ENCODE measurements at regions of chr14 and their contacts with region 1.

Region 1: GRCh38 chr14:70955543-70956480 is 48.6 kb downstream of the PCNX1 start:
- DNase-seq: no peak
- ATAC-seq: peak; percentile 87
- H3K4me3 ChIP-seq: no peak overlapping the region
- H3K27ac ChIP-seq: no peak overlapping the region
- H3K4me1 ChIP-seq: no peaks in the 10 kb centered on the region
- H3K27me3 ChIP-seq: no peaks in the 10 kb centered on the region
- CTCF ChIP-seq: peak; percentile 71 to 74 (median 73)
- EP300 ChIP-seq: no peak
- POLR2A ChIP-seq: no peak
- RAD21 ChIP-seq: peak; percentile 84

Region 2: DNA sequence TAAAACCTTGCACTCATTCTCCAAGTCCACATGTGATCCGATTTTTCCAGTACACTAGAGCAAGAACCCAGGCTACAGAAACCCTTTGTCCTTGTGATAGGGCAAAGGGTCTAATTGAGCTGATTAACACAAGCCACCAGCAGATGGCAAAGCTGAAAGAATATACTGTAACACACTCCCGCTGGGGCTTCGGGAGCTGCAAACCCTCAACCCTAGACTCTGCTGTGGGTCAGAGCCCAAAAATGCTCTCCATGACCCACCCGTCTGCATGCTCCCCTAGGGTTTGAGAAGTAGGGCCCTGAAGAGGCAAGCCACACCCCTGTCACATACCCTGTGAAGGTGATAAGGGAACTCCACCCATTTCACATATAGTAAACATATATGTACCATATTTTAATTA is 82.2 kb before region 1 on chr14:
- CTCF ChIA-PET with region 1: interaction called, 41 read pairs
- POLR2A ChIA-PET with region 1: no interaction called
- RAD21 ChIA-PET with region 1: interaction called, 4 read pairs
- SMC1A ChIA-PET with region 1: interaction called, 12 read pairs
- in situ Hi-C with region 1: no loop called
- intact Hi-C with region 1: no loop called
- DNase-seq: no peak
- ATAC-seq: peak; percentile 65
- H3K4me3 ChIP-seq: no peak overlapping the region
- H3K27ac ChIP-seq: no peak overlapping the region
- H3K4me1 ChIP-seq: peaks cover 14% of the 10 kb centered on the region
- H3K27me3 ChIP-seq: no peaks in the 10 kb centered on the region
- CTCF ChIP-seq: peak; percentile 2 to 24 (median 6); a peak in 2 of 6 replicates
- EP300 ChIP-seq: no peak
- POLR2A ChIP-seq: no peak
- RAD21 ChIP-seq: no peak

Region 3: GRCh38 chr14:70887207-70887681 is 68.6 kb before region 1 on chr14:
- CTCF ChIA-PET with region 1: interaction called, 4 read pairs
- POLR2A ChIA-PET with region 1: interaction called, 3 read pairs
- RAD21 ChIA-PET with region 1: interaction called, 8 read pairs
- SMC1A ChIA-PET with region 1: interaction called, 18 read pairs
- in situ Hi-C with region 1: no loop called
- intact Hi-C with region 1: no loop called
- DNase-seq: peak; percentile 71
- ATAC-seq: peak; percentile 72
- H3K4me3 ChIP-seq: peak overlapping the region; percentile 56
- H3K27ac ChIP-seq: peak overlapping the region; percentile 98
- H3K4me1 ChIP-seq: peaks cover 65% of the 10 kb centered on the region
- H3K27me3 ChIP-seq: no peaks in the 10 kb centered on the region
- CTCF ChIP-seq: no peak
- EP300 ChIP-seq: peak in 1 of 2 experiments; percentile 54; a peak in 1 of 4 replicates
- POLR2A ChIP-seq: no peak
- RAD21 ChIP-seq: no peak

Region 4: GRCh38 chr14:70897464-70897863 is 58.3 kb before region 1 on chr14:
- CTCF ChIA-PET with region 1: interaction called, 12 read pairs
- POLR2A ChIA-PET with region 1: no interaction called
- RAD21 ChIA-PET with region 1: no interaction called
- SMC1A ChIA-PET with region 1: interaction called, 3 read pairs
- in situ Hi-C with region 1: no loop called
- intact Hi-C with region 1: no loop called
- DNase-seq: no peak
- ATAC-seq: no peak
- H3K4me3 ChIP-seq: no peak overlapping the region
- H3K27ac ChIP-seq: no peak overlapping the region
- H3K4me1 ChIP-seq: peaks cover 22% of the 10 kb centered on the region
- H3K27me3 ChIP-seq: no peaks in the 10 kb centered on the region
- CTCF ChIP-seq: no peak
- EP300 ChIP-seq: no peak
- POLR2A ChIP-seq: no peak
- RAD21 ChIP-seq: no peak

Region 5: GRCh38 chr14:70907176-70907995 is 48.4 kb before region 1 on chr14 and contains the start of gene PCNX1:
- CTCF ChIA-PET with region 1: interaction called, 88 read pairs
- POLR2A ChIA-PET with region 1: interaction called, 3 read pairs
- RAD21 ChIA-PET with region 1: interaction called, 41 read pairs
- SMC1A ChIA-PET with region 1: interaction called, 61 read pairs
- in situ Hi-C with region 1: no loop called
- intact Hi-C with region 1: loop called (anchors 5 kb)
- DNase-seq: no peak
- ATAC-seq: peak; percentile 75
- H3K4me3 ChIP-seq: peak within 1 kb of the TSS; percentile 91
- H3K27ac ChIP-seq: peak within 1 kb of the TSS; percentile 87
- H3K4me1 ChIP-seq: 0 out of 2 replicates have a peak, but pooled peaks cover 5% of the 10 kb centered on the region
- H3K27me3 ChIP-seq: no peaks in the 10 kb centered on the region
- CTCF ChIP-seq: peak; percentile 77 to 89 (median 77); a peak in 5 of 6 replicates
- EP300 ChIP-seq: no peak; a peak in 1 of 4 replicates
- POLR2A ChIP-seq: peak; percentile 72; the same call in 1 of the 2 replicates
- RAD21 ChIP-seq: peak; percentile 73
- polyA plus RNA-seq, gene PCNX1: 4.6 to 5.1 TPM

Region 6: DNA sequence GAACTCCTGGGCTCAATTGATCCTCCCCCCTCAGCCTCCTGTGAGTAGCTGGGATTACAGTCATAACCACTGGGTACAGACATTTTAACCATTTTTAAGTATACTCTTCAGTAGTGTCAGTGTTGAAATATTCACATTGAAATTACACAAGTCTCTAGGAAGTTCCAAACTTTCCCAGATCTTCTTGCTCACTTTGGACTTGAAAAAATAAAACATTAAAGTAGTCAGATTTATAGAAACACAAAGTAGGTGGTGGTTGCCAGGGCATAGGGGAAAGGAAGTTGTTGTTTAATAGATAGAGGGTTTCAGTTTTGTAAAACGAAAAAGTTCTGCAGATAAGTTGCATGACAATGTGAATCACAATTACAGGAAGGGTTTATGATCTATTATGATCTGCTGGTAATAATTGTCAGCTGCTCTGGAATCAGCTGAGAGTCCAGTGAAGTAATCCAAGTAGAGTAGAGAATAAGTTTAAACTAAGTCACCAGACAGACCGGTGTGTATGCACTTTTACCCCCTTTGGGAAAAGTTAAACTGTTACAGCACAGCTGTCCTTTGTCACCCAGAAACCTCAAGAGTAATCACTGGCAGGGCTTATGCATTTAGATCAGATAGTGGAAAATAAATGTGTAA is 21.2 kb before region 1 on chr14:
- CTCF ChIA-PET with region 1: interaction called, 23 read pairs
- POLR2A ChIA-PET with region 1: interaction called, 3 read pairs
- RAD21 ChIA-PET with region 1: interaction called, 7 read pairs
- SMC1A ChIA-PET with region 1: interaction called, 24 read pairs
- in situ Hi-C with region 1: no loop called
- intact Hi-C with region 1: no loop called
- DNase-seq: peak; percentile 34
- ATAC-seq: peak; percentile 90
- H3K4me3 ChIP-seq: peak overlapping the region; percentile 38; the same call in 1 of the 2 replicates
- H3K27ac ChIP-seq: peak overlapping the region; percentile 56
- H3K4me1 ChIP-seq: peaks cover 14% of the 10 kb centered on the region; the same call in 1 of the 2 replicates
- H3K27me3 ChIP-seq: no peaks in the 10 kb centered on the region
- CTCF ChIP-seq: no peak
- EP300 ChIP-seq: no peak
- POLR2A ChIP-seq: no peak
- RAD21 ChIP-seq: no peak

Region 7: GRCh38 chr14:70972107-70972976 is 16.5 kb after region 1 on chr14:
- CTCF ChIA-PET with region 1: interaction called, 11 read pairs
- POLR2A ChIA-PET with region 1: no interaction called
- RAD21 ChIA-PET with region 1: interaction called, 8 read pairs
- SMC1A ChIA-PET with region 1: interaction called, 6 read pairs
- in situ Hi-C with region 1: no loop called
- intact Hi-C with region 1: no loop called
- DNase-seq: peak; percentile 44
- ATAC-seq: peak; percentile 94
- H3K4me3 ChIP-seq: no peak overlapping the region
- H3K27ac ChIP-seq: no peak overlapping the region
- H3K4me1 ChIP-seq: no peaks in the 10 kb centered on the region
- H3K27me3 ChIP-seq: no peaks in the 10 kb centered on the region
- CTCF ChIP-seq: peak; percentile 79 to 91 (median 83)
- EP300 ChIP-seq: no peak
- POLR2A ChIP-seq: no peak
- RAD21 ChIP-seq: peak; percentile 92

Region 8: GRCh38 chr14:71001742-71002141 is 45.9 kb after region 1 on chr14:
- CTCF ChIA-PET with region 1: no interaction called
- POLR2A ChIA-PET with region 1: no interaction called
- RAD21 ChIA-PET with region 1: no interaction called
- SMC1A ChIA-PET with region 1: no interaction called
- in situ Hi-C with region 1: no loop called
- intact Hi-C with region 1: no loop called
- DNase-seq: no peak
- ATAC-seq: no peak
- H3K4me3 ChIP-seq: no peak overlapping the region
- H3K27ac ChIP-seq: no peak overlapping the region
- H3K4me1 ChIP-seq: no peaks in the 10 kb centered on the region
- H3K27me3 ChIP-seq: no peaks in the 10 kb centered on the region
- CTCF ChIP-seq: no peak
- EP300 ChIP-seq: no peak
- POLR2A ChIP-seq: no peak
- RAD21 ChIP-seq: no peak

Region 9: DNA sequence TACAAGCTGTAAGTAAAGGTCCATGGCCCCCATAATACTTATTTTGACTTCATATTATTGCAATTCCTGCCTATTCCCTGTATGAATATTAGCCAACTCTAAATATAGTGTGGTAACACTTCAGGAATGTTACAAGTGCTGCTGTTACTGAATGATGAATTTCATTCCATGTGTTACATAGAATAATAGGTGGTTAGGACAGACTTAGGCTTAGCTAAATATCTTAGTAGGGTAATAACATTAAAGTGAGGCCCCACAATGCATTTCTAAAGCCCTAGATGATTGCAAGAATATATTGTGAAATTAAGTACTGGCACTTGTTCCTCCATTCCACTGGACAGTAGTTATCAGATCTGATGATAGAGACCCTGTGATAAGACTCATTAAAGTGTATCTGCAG is 134.2 kb after region 1 on chr14:
- CTCF ChIA-PET with region 1: no interaction called
- POLR2A ChIA-PET with region 1: no interaction called
- RAD21 ChIA-PET with region 1: no interaction called
- SMC1A ChIA-PET with region 1: no interaction called
- in situ Hi-C with region 1: no loop called
- intact Hi-C with region 1: no loop called
- DNase-seq: no peak
- ATAC-seq: no peak
- H3K4me3 ChIP-seq: no peak overlapping the region
- H3K27ac ChIP-seq: no peak overlapping the region
- H3K4me1 ChIP-seq: no peaks in the 10 kb centered on the region
- H3K27me3 ChIP-seq: no peaks in the 10 kb centered on the region
- CTCF ChIP-seq: no peak
- EP300 ChIP-seq: no peak
- POLR2A ChIP-seq: no peak
- RAD21 ChIP-seq: no peak

Region 10: GRCh38 chr14:71103662-71104484 is 148.1 kb after region 1 on chr14:
- CTCF ChIA-PET with region 1: no interaction called
- POLR2A ChIA-PET with region 1: no interaction called
- RAD21 ChIA-PET with region 1: no interaction called
- SMC1A ChIA-PET with region 1: no interaction called
- in situ Hi-C with region 1: no loop called
- intact Hi-C with region 1: no loop called
- DNase-seq: peak; percentile 13
- ATAC-seq: peak; percentile 88
- H3K4me3 ChIP-seq: no peak overlapping the region
- H3K27ac ChIP-seq: no peak overlapping the region
- H3K4me1 ChIP-seq: no peaks in the 10 kb centered on the region
- H3K27me3 ChIP-seq: no peaks in the 10 kb centered on the region
- CTCF ChIP-seq: peak; percentile 65 to 82 (median 75)
- EP300 ChIP-seq: no peak
- POLR2A ChIP-seq: no peak
- RAD21 ChIP-seq: peak; percentile 69

Region 11: DNA sequence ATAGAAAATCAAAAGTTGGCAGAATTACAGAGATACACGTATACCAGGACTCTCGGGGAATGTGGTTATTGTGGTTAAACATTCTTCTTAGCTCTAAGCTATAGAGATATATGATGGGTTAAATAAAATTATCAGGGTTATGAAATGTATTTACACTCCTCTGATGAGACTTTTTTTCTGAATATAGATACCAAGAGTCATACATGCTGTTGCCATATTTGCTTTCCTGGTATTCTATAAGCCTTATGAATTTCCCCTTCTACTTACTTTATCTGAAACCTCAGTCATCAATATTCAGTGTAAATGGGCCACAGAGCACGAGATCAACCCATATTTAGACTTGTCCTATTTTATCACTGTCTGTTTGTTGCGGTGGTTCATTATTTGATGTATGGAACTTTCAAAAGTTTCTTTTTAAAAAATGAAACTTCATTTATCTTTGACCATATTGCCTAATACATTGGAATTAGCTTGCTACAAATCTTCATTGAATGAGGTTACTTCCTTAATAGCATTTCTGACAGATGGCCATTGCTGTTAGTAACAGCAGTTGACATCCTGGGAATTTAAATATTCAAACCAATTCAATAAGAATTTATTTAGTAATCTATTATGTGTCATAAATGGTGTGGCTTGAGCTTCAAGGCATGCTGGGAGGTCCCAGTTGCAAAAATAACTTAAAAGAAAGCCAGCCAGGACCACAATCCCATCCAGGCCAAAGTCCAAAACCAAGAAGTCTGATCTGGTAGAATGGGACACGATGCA is 344.9 kb after region 1 on chr14:
- CTCF ChIA-PET with region 1: no interaction called
- POLR2A ChIA-PET with region 1: no interaction called
- RAD21 ChIA-PET with region 1: no interaction called
- SMC1A ChIA-PET with region 1: no interaction called
- in situ Hi-C with region 1: no loop called
- intact Hi-C with region 1: no loop called
- DNase-seq: no peak
- ATAC-seq: no peak
- H3K4me3 ChIP-seq: no peak overlapping the region
- H3K27ac ChIP-seq: no peak overlapping the region
- H3K4me1 ChIP-seq: no peaks in the 10 kb centered on the region
- H3K27me3 ChIP-seq: no peaks in the 10 kb centered on the region
- CTCF ChIP-seq: no peak
- EP300 ChIP-seq: no peak
- POLR2A ChIP-seq: no peak
- RAD21 ChIP-seq: no peak

Measured in GM12878 (cell line).